Activated T-helper 1 cell treated with anti-CD3 and anti-CD28 coated beads, Interleukin-12 subunit alpha, Interleukin-12 subunit beta, Interleukin-2, Interleukin-4 antibody, amounts not matched to agents 30 ng/mL and 10 ng/mL and 1 ng/mL, durations not matched to agents 14 hours and 24 hours and 36 hours (primary cell): ENCODE measurements at regions of chr7 and their contacts with region 1.

Region 1: DNA sequence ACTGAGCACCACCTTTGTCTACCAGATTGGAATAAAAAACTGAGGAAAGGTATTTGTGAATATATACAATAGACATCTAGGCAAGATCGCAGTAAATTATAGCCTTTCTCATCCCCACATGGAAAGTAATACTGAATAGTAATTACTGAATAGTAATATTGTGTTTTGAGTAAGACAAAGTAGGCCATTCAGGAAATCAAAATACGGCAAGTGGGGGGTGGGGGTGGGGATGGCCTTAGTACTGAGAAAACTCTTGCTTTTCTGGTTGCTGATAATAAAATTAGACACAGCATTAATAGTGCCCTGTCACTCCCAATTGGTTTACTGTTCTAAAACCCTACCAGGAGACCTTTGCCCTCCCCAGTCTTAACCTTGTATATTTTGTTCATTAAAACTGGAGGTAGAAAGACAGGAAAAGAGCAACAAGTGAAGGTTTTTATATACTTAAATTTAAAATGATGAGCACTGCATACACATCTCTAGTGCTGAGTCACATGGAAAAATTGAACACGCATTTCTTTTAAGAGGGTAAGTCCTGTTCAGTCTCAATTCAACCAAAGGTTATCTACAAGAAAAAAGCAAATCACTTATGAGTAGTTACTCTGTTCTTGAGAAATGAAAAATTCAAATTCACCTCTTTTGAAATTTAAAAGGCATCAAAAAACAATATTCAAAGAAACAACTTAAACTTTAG is 65.6 kb downstream of the IGF2BP3 start:
- DNase-seq: no peak
- H3K4me3 Mint-ChIP-seq: peak overlapping the region; percentile 7
- H3K27ac Mint-ChIP-seq: peak overlapping the region; percentile 82
- H3K4me1 Mint-ChIP-seq: peaks cover 14% of the 10 kb centered on the region
- H3K27me3 Mint-ChIP-seq: no peaks in the 10 kb centered on the region

Region 2: GRCh38 chr7:22702516-22702915 is 702.2 kb before region 1 on chr7:
- intact Hi-C with region 1: no loop called
- DNase-seq: no peak
- H3K4me3 Mint-ChIP-seq: no peak overlapping the region
- H3K27ac Mint-ChIP-seq: no peak overlapping the region
- H3K4me1 Mint-ChIP-seq: peaks cover 31% of the 10 kb centered on the region
- H3K27me3 Mint-ChIP-seq: peaks cover 6% of the 10 kb centered on the region

Region 3: GRCh38 chr7:22900101-22900500 is 504.6 kb before region 1 on chr7:
- intact Hi-C with region 1: no loop called
- DNase-seq: no peak
- H3K4me3 Mint-ChIP-seq: no peak overlapping the region
- H3K27ac Mint-ChIP-seq: no peak overlapping the region
- H3K4me1 Mint-ChIP-seq: peaks cover 10% of the 10 kb centered on the region
- H3K27me3 Mint-ChIP-seq: peaks cover 3% of the 10 kb centered on the region

Region 4: DNA sequence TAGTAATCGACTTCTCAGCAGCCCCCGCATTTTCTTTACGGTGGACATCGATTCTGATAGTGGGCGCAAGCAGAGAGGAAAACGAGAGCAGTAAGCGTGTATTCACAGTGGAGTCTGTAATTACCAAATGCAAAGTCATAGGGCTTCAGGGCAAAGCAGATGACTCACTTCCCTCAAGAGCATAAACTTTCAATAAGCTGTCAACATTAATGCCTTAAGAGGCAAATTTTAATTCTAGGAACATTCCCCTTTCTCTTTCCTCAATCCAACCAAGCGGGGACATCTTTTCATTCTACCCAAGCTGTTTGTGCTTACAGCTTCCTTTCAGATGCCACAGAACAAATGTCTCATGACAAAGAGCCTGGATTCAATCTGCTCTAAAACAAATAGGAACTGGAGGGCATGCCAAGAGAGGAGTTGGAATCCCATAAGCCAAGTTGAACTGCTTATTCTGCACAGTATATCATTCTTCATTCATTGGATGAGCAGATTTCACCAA is 57.0 kb before region 1 on chr7:
- intact Hi-C with region 1: loop called (anchors 2 kb)
- DNase-seq: no peak
- H3K4me3 Mint-ChIP-seq: peak overlapping the region; percentile 48
- H3K27ac Mint-ChIP-seq: no peak overlapping the region
- H3K4me1 Mint-ChIP-seq: peaks cover 31% of the 10 kb centered on the region
- H3K27me3 Mint-ChIP-seq: peaks cover 18% of the 10 kb centered on the region

Region 5: GRCh38 chr7:23394488-23395171 is 10.1 kb before region 1 on chr7:
- intact Hi-C with region 1: loop called (anchors 1 kb)
- DNase-seq: no peak
- H3K4me3 Mint-ChIP-seq: no peak overlapping the region
- H3K27ac Mint-ChIP-seq: no peak overlapping the region
- H3K4me1 Mint-ChIP-seq: peaks cover 9% of the 10 kb centered on the region
- H3K27me3 Mint-ChIP-seq: peaks cover 5% of the 10 kb centered on the region

Region 6: GRCh38 chr7:24323961-24324480 is 919.3 kb after region 1 on chr7:
- intact Hi-C with region 1: loop called (anchors 5 kb)
- DNase-seq: no peak
- H3K4me3 Mint-ChIP-seq: no peak overlapping the region
- H3K27ac Mint-ChIP-seq: no peak overlapping the region
- H3K4me1 Mint-ChIP-seq: no peaks in the 10 kb centered on the region
- H3K27me3 Mint-ChIP-seq: peaks cover 10% of the 10 kb centered on the region